Heart left ventricle (tissue), 16 donors: ENCODE measurements at regions of chr1 and their contacts with region 1.

Region 1: GRCh38 chr1:111948209-111949171 is 41.0 kb downstream of the KCND3 start:
- DNase-seq: peak; percentile 63 to 86 (median 72)
- ATAC-seq: peak; percentile 88 to 91 (median 90)
- H3K4me3 ChIP-seq: no peak overlapping the region
- H3K27ac ChIP-seq: peak overlapping the region in 11 of 12 donors; percentile 58 to 88 (median 73)
- H3K4me1 ChIP-seq: peaks cover 0 to 56% (median 25%) of the 10 kb centered on the region in 12 donors
- H3K27me3 ChIP-seq: no peaks in the 10 kb centered on the region
- CTCF ChIP-seq: no peak
- POLR2A ChIP-seq: no peak

Region 2: GRCh38 chr1:111778541-111779051 is 169.9 kb before region 1 on chr1:
- intact Hi-C with region 1: no loop called
- DNase-seq: no peak
- ATAC-seq: no peak
- H3K4me3 ChIP-seq: no peak overlapping the region
- H3K27ac ChIP-seq: no peak overlapping the region
- H3K4me1 ChIP-seq: no peaks in the 10 kb centered on the region
- H3K27me3 ChIP-seq: no peaks in the 10 kb centered on the region
- CTCF ChIP-seq: no peak
- POLR2A ChIP-seq: no peak

Region 3: GRCh38 chr1:111856411-111857185 is 91.9 kb before region 1 on chr1:
- intact Hi-C with region 1: loop called in 1 of 10 experiments (anchors 10 kb)
- DNase-seq: no peak
- ATAC-seq: no peak
- H3K4me3 ChIP-seq: no peak overlapping the region
- H3K27ac ChIP-seq: peak overlapping the region in 4 of 12 donors; percentile 22 to 72 (median 54)
- H3K4me1 ChIP-seq: peaks cover 0 to 34% (median 0%) of the 10 kb centered on the region in 12 donors
- H3K27me3 ChIP-seq: peaks cover 0 to 4% (median 0%) of the 10 kb centered on the region in 9 donors
- CTCF ChIP-seq: no peak
- POLR2A ChIP-seq: no peak

Region 4: DNA sequence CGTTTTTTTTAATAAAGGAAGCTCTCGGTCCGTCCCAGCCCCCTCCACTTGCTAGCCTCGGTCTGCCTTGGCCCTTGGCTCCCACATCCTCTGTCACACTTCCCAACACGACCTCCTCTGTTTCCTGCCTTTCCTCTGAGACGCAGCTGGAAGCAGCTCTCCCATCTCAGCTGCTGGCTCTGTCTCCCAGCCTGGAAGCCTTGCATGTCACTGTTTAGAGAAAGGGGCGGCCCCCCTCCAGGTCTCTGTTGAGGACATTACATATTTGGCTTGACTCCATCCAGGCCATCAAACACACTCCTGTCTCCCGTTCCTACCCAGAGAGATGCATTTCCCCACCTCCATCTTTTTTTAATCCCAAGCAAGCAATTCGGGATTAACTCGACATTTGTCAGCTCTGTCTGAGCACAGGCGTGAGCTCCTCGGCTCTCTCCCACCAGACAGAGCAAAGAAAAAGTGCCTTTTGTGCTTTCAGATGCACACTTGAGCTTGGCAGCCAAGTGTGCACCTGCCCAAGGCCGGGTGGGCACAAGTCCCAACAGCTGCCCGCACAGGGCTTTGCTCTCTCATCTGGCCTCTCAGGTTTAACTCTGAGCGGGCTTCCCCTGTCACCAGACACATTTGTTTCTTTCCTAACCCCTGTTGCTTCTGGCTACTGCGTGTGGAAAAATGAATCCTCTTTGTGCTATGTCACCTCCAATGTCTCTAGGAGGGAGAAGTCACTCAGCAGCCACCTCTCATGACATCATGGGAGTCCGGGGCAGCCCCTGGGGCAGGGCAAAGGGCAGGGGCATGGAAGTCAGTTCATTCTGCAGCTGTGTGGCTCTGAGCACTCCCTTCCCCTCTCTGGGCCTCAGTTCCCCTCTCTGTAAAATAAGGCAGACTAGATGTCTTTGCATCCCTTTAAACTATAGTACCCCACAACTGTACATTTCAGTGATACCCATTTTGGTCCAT is 67.3 kb before region 1 on chr1:
- intact Hi-C with region 1: loop called in 1 of 10 experiments (anchors 10 kb)
- DNase-seq: peak in 3 of 5 donors; percentile 36 to 72 (median 44)
- ATAC-seq: peak; percentile 27 to 73 (median 52)
- H3K4me3 ChIP-seq: no peak overlapping the region
- H3K27ac ChIP-seq: peak overlapping the region in 4 of 12 donors; percentile 12 to 53 (median 36)
- H3K4me1 ChIP-seq: peaks cover 0 to 60% (median 28%) of the 10 kb centered on the region in 12 donors
- H3K27me3 ChIP-seq: no peaks in the 10 kb centered on the region
- CTCF ChIP-seq: no peak
- POLR2A ChIP-seq: no peak

Region 5: DNA sequence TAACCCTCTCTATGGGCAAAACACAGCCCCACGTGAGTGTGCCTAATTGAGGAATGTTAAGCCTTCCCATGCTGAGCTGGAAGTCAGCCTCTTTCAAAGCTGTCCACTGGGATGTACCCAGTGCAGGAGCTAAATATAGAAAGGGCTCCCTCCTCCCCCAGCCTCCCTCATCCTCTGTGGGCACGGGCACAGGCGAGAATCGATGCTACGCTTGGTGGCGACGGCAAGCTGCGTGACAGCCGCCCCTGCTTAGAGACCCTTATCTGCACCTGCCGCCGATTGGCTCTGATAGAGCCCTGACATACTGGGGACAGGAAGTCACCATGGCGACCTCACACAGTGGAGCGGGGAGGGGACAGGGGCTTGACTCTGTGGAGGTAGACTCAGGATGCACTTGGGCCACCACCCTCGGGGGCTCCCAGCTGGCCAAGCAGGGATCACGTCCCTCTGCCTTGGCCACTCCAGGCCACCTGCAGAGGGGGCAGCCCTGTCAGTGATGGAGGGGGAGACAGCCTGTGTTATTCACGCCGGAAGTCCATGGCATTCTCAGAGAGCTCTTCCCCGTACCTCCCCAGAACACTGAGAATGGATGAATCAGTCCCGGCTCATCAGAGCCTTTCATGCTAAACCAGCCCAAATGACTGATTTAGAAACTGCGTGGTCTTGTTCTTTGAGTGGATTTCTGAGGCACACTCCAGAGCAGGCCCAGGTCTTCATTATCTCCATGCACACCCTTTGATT is 43.8 kb before region 1 on chr1:
- intact Hi-C with region 1: loop called in 2 of 10 experiments (anchors 5 kb)
- DNase-seq: peak in 4 of 5 donors; percentile 36 to 64 (median 50)
- ATAC-seq: peak; percentile 87 to 94 (median 92)
- H3K4me3 ChIP-seq: peak overlapping the region in 1 of 12 donors; percentile 9
- H3K27ac ChIP-seq: peak overlapping the region in 8 of 12 donors; percentile 36 to 70 (median 57)
- H3K4me1 ChIP-seq: peaks cover 0 to 53% (median 16%) of the 10 kb centered on the region in 12 donors
- H3K27me3 ChIP-seq: no peaks in the 10 kb centered on the region
- CTCF ChIP-seq: no peak
- POLR2A ChIP-seq: no peak

Region 6: DNA sequence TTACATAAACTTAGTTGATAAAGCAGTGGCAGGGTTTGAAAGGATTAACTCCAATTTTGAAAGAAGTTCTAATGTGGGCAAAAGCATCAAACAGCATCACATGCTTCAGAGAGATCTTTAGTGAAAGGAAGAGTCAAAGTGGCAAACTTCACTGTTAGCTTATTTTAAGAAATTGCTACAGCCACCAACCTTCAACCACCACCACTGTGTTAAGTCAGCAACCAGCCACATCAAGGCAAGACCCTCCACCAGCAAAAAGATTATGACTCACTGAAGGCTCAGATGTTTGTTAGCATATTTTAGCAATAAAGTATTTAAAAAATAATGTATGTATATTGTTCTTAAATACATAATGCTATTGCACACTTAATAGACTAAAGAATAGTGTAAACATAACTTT is 1420.5 kb after region 1 on chr1:
- intact Hi-C with region 1: no loop called
- DNase-seq: no peak
- ATAC-seq: no peak
- H3K4me3 ChIP-seq: no peak overlapping the region
- H3K27ac ChIP-seq: no peak overlapping the region
- H3K4me1 ChIP-seq: no peaks in the 10 kb centered on the region
- H3K27me3 ChIP-seq: no peaks in the 10 kb centered on the region
- CTCF ChIP-seq: no peak
- POLR2A ChIP-seq: no peak